CD8-positive, alpha-beta T cell (primary cell): ENCODE measurements at regions of chr9 and their contacts with region 1.

Region 1: DNA sequence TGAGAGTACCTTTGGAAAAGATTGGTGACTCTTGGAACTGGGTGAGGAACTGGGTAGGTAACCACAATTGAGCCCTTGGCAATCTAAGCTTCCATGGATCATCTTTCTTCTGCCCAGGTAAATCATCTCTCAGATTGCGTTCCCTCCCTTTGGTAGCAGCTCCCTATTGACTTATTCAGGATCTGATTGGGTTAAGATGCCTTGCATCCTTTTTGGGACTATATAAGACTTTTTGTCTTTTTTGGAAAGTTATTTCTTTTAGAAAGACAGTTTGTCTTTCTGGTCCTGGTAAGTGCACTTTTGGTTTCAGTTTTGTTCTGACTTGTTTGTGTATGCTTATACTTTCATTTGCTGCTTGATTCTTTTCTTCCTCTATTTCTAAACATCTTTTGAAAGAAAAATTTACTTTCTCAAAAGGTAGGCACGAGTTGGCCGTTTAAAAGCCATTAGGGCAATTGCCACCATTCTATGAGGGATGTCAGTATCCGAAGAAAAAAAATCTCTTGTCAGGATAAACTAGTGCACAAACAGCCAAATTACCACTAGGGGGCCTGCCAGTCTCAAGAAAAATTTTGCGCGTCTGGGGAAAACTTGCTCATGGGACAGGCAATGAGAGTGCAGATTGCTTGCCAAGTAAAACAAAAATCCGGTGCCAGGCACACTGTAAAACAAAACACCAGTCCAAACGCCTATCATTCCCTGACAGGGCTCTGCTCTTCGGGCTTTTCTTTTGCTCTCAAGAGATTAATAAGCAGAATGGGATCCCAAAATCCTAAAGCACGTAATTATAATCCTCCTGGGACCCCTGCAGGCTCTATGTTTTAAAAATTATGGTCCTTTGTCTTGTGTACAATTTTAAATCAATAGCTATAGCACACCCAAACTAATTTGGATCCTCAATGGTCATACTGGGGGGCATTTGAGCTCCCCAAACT is 12.8 kb downstream of the OR1J1 start:
- DNase-seq: peak; percentile 37 to 79 (median 64)
- ATAC-seq: peak; percentile 78
- H3K4me3 ChIP-seq: peak overlapping the region; percentile 47 to 49
- H3K4me3 Mint-ChIP-seq: peak overlapping the region; percentile 89
- H3K27ac ChIP-seq: peak overlapping the region; percentile 39 to 58
- H3K27ac Mint-ChIP-seq: peak overlapping the region; percentile 87
- H3K4me1 ChIP-seq: peaks cover 5% of the 10 kb centered on the region
- H3K4me1 Mint-ChIP-seq: peaks cover 10% of the 10 kb centered on the region
- H3K27me3 ChIP-seq: no peaks in the 10 kb centered on the region
- H3K27me3 Mint-ChIP-seq: peaks cover 28% of the 10 kb centered on the region
- CTCF ChIP-seq: peak; percentile 81

Region 2: GRCh38 chr9:122498883-122499288 is 34.0 kb after region 1 on chr9:
- CTCF ChIA-PET with region 1: interaction called, 10 read pairs
- POLR2A ChIA-PET with region 1: no interaction called
- intact Hi-C with region 1: no loop called
- DNase-seq: peak in 3 of 9 experiments; percentile 14 to 51 (median 35)
- ATAC-seq: peak; percentile 71
- H3K4me3 ChIP-seq: no peak overlapping the region
- H3K4me3 Mint-ChIP-seq: no peak overlapping the region
- H3K27ac ChIP-seq: no peak overlapping the region
- H3K27ac Mint-ChIP-seq: no peak overlapping the region
- H3K4me1 ChIP-seq: no peaks in the 10 kb centered on the region
- H3K4me1 Mint-ChIP-seq: no peaks in the 10 kb centered on the region
- H3K27me3 ChIP-seq: no peaks in the 10 kb centered on the region
- H3K27me3 Mint-ChIP-seq: peaks cover 29% of the 10 kb centered on the region
- CTCF ChIP-seq: peak; percentile 72